PC-3 (cell line): ENCODE measurements at regions of chr7 and their contacts with region 1.

Region 1: GRCh38 chr7:105531792-105532671 is at the start of gene RINT1:
- DNase-seq: peak; percentile 96
- ATAC-seq: peak; percentile 98
- H3K4me3 ChIP-seq: peak within 1 kb of the TSS; percentile 91
- H3K27ac ChIP-seq: peak within 1 kb of the TSS; percentile 12; the same call in 1 of the 2 replicates
- H3K4me1 ChIP-seq: peaks cover 18% of the 10 kb centered on the region
- H3K27me3 ChIP-seq: no peaks in the 10 kb centered on the region
- CTCF ChIP-seq: peak; percentile 88
- total RNA-seq, gene RINT1: 20.8 TPM in 2 replicates

Region 2: DNA sequence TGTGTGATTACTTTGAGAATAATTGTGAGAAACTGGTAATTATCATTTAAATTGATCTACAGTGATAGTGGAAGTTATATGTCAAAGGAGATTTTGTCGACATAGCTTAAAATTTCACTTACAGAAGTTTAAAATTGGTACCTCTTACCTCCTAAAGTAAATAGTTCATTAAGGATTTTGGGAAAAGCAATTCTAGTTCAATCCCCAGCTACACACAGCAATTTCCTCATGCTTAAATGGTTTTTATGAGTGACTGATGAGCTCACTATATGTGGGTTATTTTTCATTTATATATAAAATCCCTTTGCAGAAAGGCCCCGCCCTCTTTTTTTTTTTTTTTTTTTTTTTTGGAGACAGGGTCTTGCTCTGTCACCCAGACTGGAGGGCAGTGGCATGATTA is 505.3 kb before region 1 on chr7:
- CTCF ChIA-PET with region 1: no interaction called
- POLR2A ChIA-PET with region 1: interaction called, 17 read pairs
- intact Hi-C with region 1: no loop called
- DNase-seq: peak; percentile 36
- ATAC-seq: 0 out of 2 replicates have a peak, but pooled peaks have one; percentile 27
- H3K4me3 ChIP-seq: no peak overlapping the region
- H3K27ac ChIP-seq: no peak overlapping the region
- H3K4me1 ChIP-seq: peaks cover 34% of the 10 kb centered on the region
- H3K27me3 ChIP-seq: no peaks in the 10 kb centered on the region
- CTCF ChIP-seq: no peak

Region 3: GRCh38 chr7:105352018-105352612 is 179.9 kb before region 1 on chr7:
- CTCF ChIA-PET with region 1: no interaction called
- POLR2A ChIA-PET with region 1: interaction called, 14 read pairs
- intact Hi-C with region 1: no loop called
- DNase-seq: peak; percentile 12
- ATAC-seq: peak; percentile 60
- H3K4me3 ChIP-seq: no peak overlapping the region
- H3K27ac ChIP-seq: no peak overlapping the region
- H3K4me1 ChIP-seq: no peaks in the 10 kb centered on the region
- H3K27me3 ChIP-seq: no peaks in the 10 kb centered on the region
- CTCF ChIP-seq: no peak

Region 4: DNA sequence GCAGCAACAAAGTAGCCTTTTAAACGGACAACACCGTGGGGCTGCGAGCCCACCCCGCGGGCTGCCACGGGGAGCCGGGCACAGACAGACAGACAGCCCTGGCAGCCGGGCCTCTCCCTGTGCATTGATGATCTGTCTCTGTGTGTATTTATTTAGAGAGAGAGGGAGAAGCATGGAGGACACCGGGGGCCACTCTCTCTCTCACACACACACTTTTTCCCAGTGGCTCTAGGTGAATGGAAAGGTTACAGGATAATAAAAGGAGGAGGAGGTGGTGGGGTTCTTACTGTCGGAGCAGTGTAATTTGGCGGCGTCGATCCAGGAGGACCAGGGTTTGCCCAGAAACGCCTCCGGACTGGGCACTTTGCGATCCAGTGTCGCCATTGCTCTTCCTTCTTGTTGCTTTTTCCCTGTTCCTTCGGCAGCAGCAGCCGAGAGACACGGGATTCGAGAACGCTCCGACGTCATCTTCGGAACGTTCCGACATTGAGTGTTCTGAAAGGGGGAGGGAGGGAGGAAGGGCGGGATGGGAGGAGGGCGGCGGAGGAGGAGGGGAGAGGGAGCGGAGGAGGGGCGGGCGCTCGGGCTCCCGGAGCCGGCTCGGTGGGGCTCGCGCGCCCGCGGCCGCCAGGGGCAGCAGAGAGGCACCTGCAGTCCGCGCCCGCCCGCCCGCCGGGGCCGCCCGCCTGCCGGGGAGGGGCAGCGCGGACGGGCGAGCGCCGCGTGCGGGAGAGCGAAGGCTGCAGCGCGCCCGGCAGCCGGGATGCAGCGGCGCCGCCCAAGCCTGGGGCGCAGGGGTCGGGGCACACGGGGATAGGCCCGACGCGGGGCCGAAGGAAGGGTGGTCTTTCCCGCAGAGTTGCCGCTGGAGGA is 344.3 kb after region 1 on chr7 and contains the start of gene ATXN7L1:
- CTCF ChIA-PET with region 1: no interaction called
- POLR2A ChIA-PET with region 1: no interaction called
- intact Hi-C with region 1: no loop called
- DNase-seq: peak; percentile 99
- ATAC-seq: peak; percentile 77
- H3K4me3 ChIP-seq: peak within 1 kb of the TSS; percentile 90
- H3K27ac ChIP-seq: peak within 1 kb of the TSS; percentile 62
- H3K4me1 ChIP-seq: peaks cover 32% of the 10 kb centered on the region
- H3K27me3 ChIP-seq: no peaks in the 10 kb centered on the region
- CTCF ChIP-seq: 0 out of 2 replicates have a peak, but pooled peaks have one; percentile 23
- total RNA-seq, gene ATXN7L1: 6.2 and 16.0 TPM in 2 replicates